Activated B cell treated with CpG ODN at 0.5 μM for 24 hours (primary cell): ENCODE measurements at regions of chrX and their contacts with region 1.

Region 1: GRCh38 chrX:51420610-51421009 is 75.8 kb downstream of the NUDT11 start:
- DNase-seq: no peak
- ATAC-seq: no peak
- H3K4me3 Mint-ChIP-seq: no peak overlapping the region
- H3K27ac Mint-ChIP-seq: no peak overlapping the region
- H3K4me1 Mint-ChIP-seq: peaks cover 10% of the 10 kb centered on the region
- H3K27me3 Mint-ChIP-seq: no peaks in the 10 kb centered on the region
- CTCF ChIP-seq: no peak

Region 2: GRCh38 chrX:51144852-51145442 is 275.7 kb before region 1 on chrX:
- CTCF ChIA-PET with region 1: interaction called, 3 read pairs
- POLR2A ChIA-PET with region 1: no interaction called
- intact Hi-C with region 1: loop called (anchors 1 kb)
- DNase-seq: no peak
- ATAC-seq: peak; percentile 45
- H3K4me3 Mint-ChIP-seq: no peak overlapping the region
- H3K27ac Mint-ChIP-seq: no peak overlapping the region
- H3K4me1 Mint-ChIP-seq: no peaks in the 10 kb centered on the region
- H3K27me3 Mint-ChIP-seq: peaks cover 2% of the 10 kb centered on the region
- CTCF ChIP-seq: no peak

Region 3: GRCh38 chrX:51336584-51336983 is 84.0 kb before region 1 on chrX:
- CTCF ChIA-PET with region 1: interaction called, 67 read pairs
- POLR2A ChIA-PET with region 1: no interaction called
- intact Hi-C with region 1: loop called (anchors 1 kb)
- DNase-seq: no peak
- ATAC-seq: peak; percentile 71
- H3K4me3 Mint-ChIP-seq: no peak overlapping the region
- H3K27ac Mint-ChIP-seq: no peak overlapping the region
- H3K4me1 Mint-ChIP-seq: peaks cover 9% of the 10 kb centered on the region
- H3K27me3 Mint-ChIP-seq: peaks cover 1% of the 10 kb centered on the region
- CTCF ChIP-seq: no peak

Region 4: DNA sequence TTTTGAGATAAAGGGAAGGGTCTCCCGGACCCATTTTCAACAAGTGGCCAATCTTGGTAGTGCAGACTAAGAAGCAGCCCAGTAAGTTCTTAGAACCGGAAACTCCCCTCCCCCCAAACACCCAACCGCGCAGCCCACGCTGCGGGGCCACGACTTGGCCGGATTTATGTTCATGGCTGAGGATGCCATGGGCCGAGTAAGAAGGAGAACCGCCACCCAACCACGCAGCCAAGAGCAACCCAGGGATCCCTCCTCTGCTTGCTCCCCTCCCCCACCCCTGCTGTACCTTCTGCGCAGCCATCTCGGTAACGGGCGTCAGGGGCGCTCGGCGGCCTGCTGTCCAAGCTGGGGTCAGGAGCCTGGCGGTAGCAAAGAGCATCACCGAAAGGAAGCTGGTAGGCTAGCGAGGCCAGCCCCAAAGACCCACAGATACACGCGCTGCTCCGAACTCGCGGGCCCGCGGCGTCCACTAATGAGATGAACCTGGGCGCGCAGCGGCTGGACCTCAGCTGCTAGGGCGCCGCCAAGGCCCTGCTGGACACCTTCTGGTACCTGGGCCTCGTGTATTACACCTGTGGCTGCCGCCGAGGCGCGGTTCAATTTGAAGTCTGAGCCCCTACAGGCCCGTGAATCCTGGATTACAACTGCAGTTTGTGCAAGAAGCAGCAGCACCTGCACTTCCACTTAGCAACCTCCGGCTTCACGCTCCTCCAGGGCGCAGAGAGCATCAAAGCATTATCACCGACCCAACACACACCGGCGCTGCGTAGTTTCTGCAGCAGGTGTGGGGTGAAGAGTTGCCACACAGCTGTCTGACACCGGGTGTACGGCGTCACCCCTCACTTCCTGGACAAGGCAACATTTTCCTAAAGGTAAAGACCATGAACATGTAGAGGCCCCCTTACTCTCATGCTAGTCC is 24.5 kb before region 1 on chrX:
- CTCF ChIA-PET with region 1: interaction called, 8 read pairs
- POLR2A ChIA-PET with region 1: no interaction called
- intact Hi-C with region 1: loop called (anchors 1 kb)
- DNase-seq: peak; percentile 32
- ATAC-seq: peak; percentile 70
- H3K4me3 Mint-ChIP-seq: peak overlapping the region; percentile 93
- H3K27ac Mint-ChIP-seq: peak overlapping the region; percentile 91
- H3K4me1 Mint-ChIP-seq: peaks cover 31% of the 10 kb centered on the region
- H3K27me3 Mint-ChIP-seq: no peaks in the 10 kb centered on the region
- CTCF ChIP-seq: no peak

Region 5: GRCh38 chrX:51406688-51407461 is 13.7 kb before region 1 on chrX:
- CTCF ChIA-PET with region 1: interaction called, 14 read pairs
- POLR2A ChIA-PET with region 1: no interaction called
- intact Hi-C with region 1: no loop called
- DNase-seq: no peak
- ATAC-seq: no peak
- H3K4me3 Mint-ChIP-seq: no peak overlapping the region
- H3K27ac Mint-ChIP-seq: no peak overlapping the region
- H3K4me1 Mint-ChIP-seq: no peaks in the 10 kb centered on the region
- H3K27me3 Mint-ChIP-seq: no peaks in the 10 kb centered on the region
- CTCF ChIP-seq: no peak